Head of caudate nucleus (tissue), 42 donors: ENCODE measurements at regions of chr12 and their contacts with region 1.

Region 1: DNA sequence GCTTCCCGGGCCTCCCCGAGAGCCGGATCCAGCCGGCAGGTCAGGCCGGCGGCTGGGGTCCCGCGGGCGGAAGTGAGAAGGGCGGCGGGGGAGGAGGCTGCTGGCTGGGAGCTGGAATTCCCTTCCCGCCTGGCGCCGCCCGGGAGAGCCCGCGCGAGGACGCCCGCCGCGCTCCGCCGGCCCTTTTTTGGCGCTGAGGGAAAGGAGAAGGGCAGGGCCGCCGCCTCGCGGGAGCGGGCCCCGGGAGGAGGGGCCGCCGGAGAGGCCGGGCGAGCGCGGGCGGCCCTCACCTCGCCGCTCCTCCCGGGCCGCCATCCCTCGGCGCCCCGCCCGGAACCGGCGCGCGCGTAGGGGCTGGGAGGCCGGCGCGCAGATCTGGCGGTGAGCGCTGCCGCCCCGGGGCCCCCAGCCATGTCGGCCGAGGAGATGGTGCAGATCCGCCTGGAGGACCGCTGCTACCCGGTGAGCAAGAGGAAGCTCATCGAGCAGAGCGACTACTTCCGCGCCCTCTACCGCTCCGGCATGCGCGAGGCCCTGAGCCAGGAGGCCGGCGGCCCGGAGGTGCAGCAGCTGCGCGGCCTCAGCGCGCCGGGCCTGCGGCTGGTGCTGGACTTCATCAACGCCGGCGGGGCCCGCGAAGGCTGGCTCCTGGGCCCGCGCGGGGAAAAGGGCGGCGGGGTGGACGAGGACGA is at the starts of genes KLHL42 and MANSC4:
- DNase-seq: peak; percentile 23 to 86 (median 74)

Region 2: GRCh38 chr12:27710592-27711316 is 69.3 kb before region 1 on chr12 and contains the start of gene MRPS35:
- intact Hi-C with region 1: loop called (anchors 5 kb)
- DNase-seq: peak; percentile 79 to 97 (median 93)

Region 3: GRCh38 chr12:27743601-27744000 is 36.5 kb before region 1 on chr12:
- intact Hi-C with region 1: no loop called
- DNase-seq: no peak